ENCODE measurements at regions of chr17 and their contacts with region 1.

Region 1: DNA sequence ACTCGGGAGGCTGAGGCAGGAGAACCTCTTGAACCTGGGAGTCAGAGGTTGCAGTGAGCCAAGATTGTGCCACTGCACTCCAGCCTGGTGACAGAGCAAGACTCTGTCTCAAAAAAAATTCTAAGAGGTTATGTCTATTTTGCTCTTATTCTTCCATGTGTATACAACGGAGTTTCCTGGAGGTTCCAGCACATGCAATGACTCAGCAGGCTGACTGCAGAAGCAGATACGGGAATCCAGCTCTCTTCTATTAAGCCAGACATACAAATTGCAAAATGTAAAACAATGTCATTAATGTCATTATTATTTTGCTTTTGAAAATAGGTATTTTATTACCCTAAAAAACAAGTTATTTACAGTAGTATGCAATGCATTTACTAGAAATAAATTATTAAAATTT is 18.4 kb downstream of the MIEF2 start:
- DNase-seq: no peak

Region 2: GRCh38 chr17:18217412-18218015 is 61.4 kb before region 1 on chr17:
- in situ Hi-C with region 1: loop called (anchors 10 kb)
- DNase-seq: peak; percentile 71

Measured in KBM-7 (cell line).